ENCODE measurements at regions of chr2 and their contacts with region 1.

Region 1: DNA sequence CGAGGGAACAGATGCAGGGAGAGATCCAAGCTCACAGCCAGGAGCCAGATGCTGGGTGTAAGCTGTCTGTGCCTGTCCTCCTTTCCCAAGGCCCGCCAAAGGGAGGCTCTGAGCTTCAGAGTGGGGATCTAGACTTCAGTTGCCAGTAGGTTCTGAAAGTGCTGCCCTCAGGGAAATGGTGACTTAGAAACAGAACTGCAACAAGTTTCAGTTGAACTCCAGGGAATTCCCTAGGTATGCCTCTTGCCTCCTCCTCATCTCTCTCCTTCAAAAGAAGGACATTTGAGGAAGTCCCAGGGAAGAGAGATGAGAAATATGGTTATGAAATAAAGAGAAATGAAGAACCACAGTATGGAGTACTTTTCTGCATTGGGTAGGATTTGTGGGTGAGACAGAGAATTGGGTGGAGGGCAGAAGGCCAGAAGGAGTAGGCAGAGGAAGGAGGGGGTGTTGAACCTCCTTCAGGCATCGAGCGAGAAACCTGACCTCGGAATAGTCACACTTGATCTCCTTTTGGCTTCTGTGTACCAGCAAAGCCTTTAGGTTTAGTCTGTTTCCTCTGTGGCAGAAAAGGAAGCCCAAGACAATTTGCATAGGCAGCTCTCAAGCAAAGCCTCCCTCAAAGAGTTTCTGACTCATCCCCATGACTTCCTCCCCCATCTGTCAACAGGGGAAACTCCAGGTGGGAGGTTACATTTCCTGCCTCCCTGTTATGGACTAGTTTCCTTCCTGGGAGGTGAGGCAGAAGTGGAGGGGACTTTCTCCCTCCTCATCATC is 45.7 kb downstream of the QPCT start:
- DNase-seq: peak in 8 of 9 donors; percentile 30 to 72 (median 52)
- ATAC-seq: peak; percentile 94
- H3K4me3 ChIP-seq: peak overlapping the region; percentile 19
- H3K4me3 Mint-ChIP-seq: peak overlapping the region in 9 of 10 donors; percentile 43 to 68 (median 55)
- H3K27ac ChIP-seq: peak overlapping the region; percentile 8
- H3K27ac Mint-ChIP-seq: peak overlapping the region in 7 of 9 donors; percentile 72 to 84 (median 80)
- H3K4me1 ChIP-seq: peaks cover 25 to 27% of the 10 kb centered on the region in 2 donors
- H3K4me1 Mint-ChIP-seq: peaks cover 0 to 18% (median 0%) of the 10 kb centered on the region in 7 donors
- H3K27me3 ChIP-seq: no peaks in the 10 kb centered on the region
- H3K27me3 Mint-ChIP-seq: peaks cover 0 to 19% (median 0%) of the 10 kb centered on the region in 5 donors

Region 2: GRCh38 chr2:36615207-36615606 is 775.0 kb before region 1 on chr2:
- CTCF ChIA-PET with region 1: no interaction called
- POLR2A ChIA-PET with region 1: no interaction called
- intact Hi-C with region 1: no loop called
- DNase-seq: no peak
- ATAC-seq: no peak
- H3K4me3 ChIP-seq: no peak overlapping the region
- H3K4me3 Mint-ChIP-seq: no peak overlapping the region
- H3K27ac ChIP-seq: no peak overlapping the region
- H3K27ac Mint-ChIP-seq: no peak overlapping the region
- H3K4me1 ChIP-seq: no peaks in the 10 kb centered on the region
- H3K4me1 Mint-ChIP-seq: peaks cover 0 to 2% (median 0%) of the 10 kb centered on the region in 7 donors
- H3K27me3 ChIP-seq: no peaks in the 10 kb centered on the region
- H3K27me3 Mint-ChIP-seq: peaks cover 1 to 25% (median 6%) of the 10 kb centered on the region in 5 donors

Region 3: GRCh38 chr2:37231241-37232130 is 158.7 kb before region 1 on chr2 and contains the starts of genes CEBPZ and NDUFAF7:
- CTCF ChIA-PET with region 1: no interaction called
- POLR2A ChIA-PET with region 1: no interaction called
- intact Hi-C with region 1: loop called in 1 of 2 experiments (anchors 5 kb)
- DNase-seq: peak; percentile 71 to 87 (median 84)
- ATAC-seq: peak; percentile 95
- H3K4me3 ChIP-seq: peak within 1 kb of the TSS; percentile 84
- H3K4me3 Mint-ChIP-seq: no peak within 1 kb of the TSS
- H3K27ac ChIP-seq: peak within 1 kb of the TSS; percentile 93
- H3K27ac Mint-ChIP-seq: no peak within 1 kb of the TSS
- H3K4me1 ChIP-seq: peaks cover 31 to 39% of the 10 kb centered on the region in 2 donors
- H3K4me1 Mint-ChIP-seq: peaks cover 25 to 54% (median 43%) of the 10 kb centered on the region in 7 donors
- H3K27me3 ChIP-seq: no peaks in the 10 kb centered on the region
- H3K27me3 Mint-ChIP-seq: no peaks in the 10 kb centered on the region
- total RNA-seq, gene CEBPZ: 40.4 to 67.6 (median 56.4) TPM
- total RNA-seq, gene NDUFAF7: 21.6 to 38.2 (median 28.5) TPM

Region 4: GRCh38 chr2:37344453-37345361 is 45.5 kb before region 1 on chr2 and contains the start of gene QPCT:
- CTCF ChIA-PET with region 1: interaction called, 4 read pairs
- POLR2A ChIA-PET with region 1: no interaction called
- intact Hi-C with region 1: loop called (anchors 1 to 5 kb)
- DNase-seq: peak; percentile 25 to 49 (median 44)
- ATAC-seq: peak; percentile 86
- H3K4me3 ChIP-seq: peak within 1 kb of the TSS; percentile 57
- H3K4me3 Mint-ChIP-seq: peak within 1 kb of the TSS; percentile 78 to 89 (median 86)
- H3K27ac ChIP-seq: no peak within 1 kb of the TSS
- H3K27ac Mint-ChIP-seq: peak within 1 kb of the TSS in 6 of 9 donors; percentile 9 to 68 (median 50)
- H3K4me1 ChIP-seq: peaks cover 4 to 6% of the 10 kb centered on the region in 2 donors
- H3K4me1 Mint-ChIP-seq: peaks cover 4 to 17% (median 10%) of the 10 kb centered on the region in 7 donors
- H3K27me3 ChIP-seq: no peaks in the 10 kb centered on the region
- H3K27me3 Mint-ChIP-seq: peaks cover 1 to 83% (median 17%) of the 10 kb centered on the region in 5 donors
- total RNA-seq, gene QPCT: 0.36 to 15.1 (median 0.86) TPM

Region 5: DNA sequence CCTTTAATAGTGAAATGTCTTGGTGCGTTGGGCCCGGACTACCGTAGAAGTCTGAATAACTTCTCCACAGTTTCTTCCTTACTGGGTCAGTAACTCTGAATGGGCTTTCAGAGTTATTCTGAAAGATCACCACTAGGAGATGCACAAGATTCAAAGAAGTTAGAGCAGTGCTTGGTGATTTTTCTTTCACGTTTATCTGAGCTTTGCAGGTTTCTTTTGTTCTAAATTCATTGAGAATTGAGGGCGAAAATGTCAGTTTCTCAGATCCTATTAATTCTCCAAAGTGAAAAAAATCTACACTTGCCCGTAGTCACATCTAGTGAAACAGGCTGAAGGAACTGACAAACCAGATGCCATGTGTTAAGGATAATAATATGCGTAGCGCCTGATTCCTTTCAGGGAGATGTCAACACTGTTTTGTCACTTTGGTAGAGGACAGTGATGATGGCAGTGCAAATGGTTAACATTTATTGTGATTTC is 24.3 kb after region 1 on chr2:
- CTCF ChIA-PET with region 1: interaction called, 22 read pairs
- POLR2A ChIA-PET with region 1: no interaction called
- intact Hi-C with region 1: no loop called
- DNase-seq: peak in 6 of 9 donors; percentile 28 to 63 (median 57)
- ATAC-seq: peak; percentile 85
- H3K4me3 ChIP-seq: no peak overlapping the region
- H3K4me3 Mint-ChIP-seq: no peak overlapping the region
- H3K27ac ChIP-seq: no peak overlapping the region
- H3K27ac Mint-ChIP-seq: no peak overlapping the region
- H3K4me1 ChIP-seq: no peaks in the 10 kb centered on the region
- H3K4me1 Mint-ChIP-seq: peaks cover 0 to 7% (median 5%) of the 10 kb centered on the region in 7 donors
- H3K27me3 ChIP-seq: no peaks in the 10 kb centered on the region
- H3K27me3 Mint-ChIP-seq: peaks cover 0 to 17% (median 0%) of the 10 kb centered on the region in 5 donors

Region 6: GRCh38 chr2:37877457-37878315 is 487.5 kb after region 1 on chr2:
- CTCF ChIA-PET with region 1: interaction called, 45 read pairs
- POLR2A ChIA-PET with region 1: no interaction called
- intact Hi-C with region 1: no loop called
- DNase-seq: peak in 7 of 9 donors; percentile 15 to 60 (median 48)
- ATAC-seq: peak; percentile 81
- H3K4me3 ChIP-seq: no peak overlapping the region
- H3K4me3 Mint-ChIP-seq: no peak overlapping the region
- H3K27ac ChIP-seq: no peak overlapping the region
- H3K27ac Mint-ChIP-seq: no peak overlapping the region
- H3K4me1 ChIP-seq: no peaks in the 10 kb centered on the region
- H3K4me1 Mint-ChIP-seq: peaks cover 0 to 8% (median 0%) of the 10 kb centered on the region in 7 donors
- H3K27me3 ChIP-seq: no peaks in the 10 kb centered on the region
- H3K27me3 Mint-ChIP-seq: peaks cover 9 to 30% (median 18%) of the 10 kb centered on the region in 5 donors